PC-3 (cell line): ENCODE measurements at regions of chr11 and their contacts with region 1.

Region 1: GRCh38 chr11:59135648-59136461 is 6.8 kb upstream of the FAM111A start:
- DNase-seq: peak; percentile 85
- ATAC-seq: peak; percentile 100
- H3K4me3 ChIP-seq: peak overlapping the region; percentile 40
- H3K27ac ChIP-seq: no peak overlapping the region
- H3K4me1 ChIP-seq: 0 out of 2 replicates have a peak, but pooled peaks cover 3% of the 10 kb centered on the region
- H3K27me3 ChIP-seq: no peaks in the 10 kb centered on the region
- CTCF ChIP-seq: peak; percentile 98

Region 2: GRCh38 chr11:59053387-59053786 is 82.5 kb before region 1 on chr11:
- CTCF ChIA-PET with region 1: interaction called, 5 read pairs
- POLR2A ChIA-PET with region 1: no interaction called
- intact Hi-C with region 1: loop called (anchors 1 kb)
- DNase-seq: peak; percentile 75
- ATAC-seq: peak; percentile 51; the same call in 1 of the 2 replicates
- H3K4me3 ChIP-seq: no peak overlapping the region
- H3K27ac ChIP-seq: no peak overlapping the region
- H3K4me1 ChIP-seq: peaks cover 7% of the 10 kb centered on the region; the same call in 1 of the 2 replicates
- H3K27me3 ChIP-seq: peaks cover 48% of the 10 kb centered on the region
- CTCF ChIP-seq: peak; percentile 85

Region 3: DNA sequence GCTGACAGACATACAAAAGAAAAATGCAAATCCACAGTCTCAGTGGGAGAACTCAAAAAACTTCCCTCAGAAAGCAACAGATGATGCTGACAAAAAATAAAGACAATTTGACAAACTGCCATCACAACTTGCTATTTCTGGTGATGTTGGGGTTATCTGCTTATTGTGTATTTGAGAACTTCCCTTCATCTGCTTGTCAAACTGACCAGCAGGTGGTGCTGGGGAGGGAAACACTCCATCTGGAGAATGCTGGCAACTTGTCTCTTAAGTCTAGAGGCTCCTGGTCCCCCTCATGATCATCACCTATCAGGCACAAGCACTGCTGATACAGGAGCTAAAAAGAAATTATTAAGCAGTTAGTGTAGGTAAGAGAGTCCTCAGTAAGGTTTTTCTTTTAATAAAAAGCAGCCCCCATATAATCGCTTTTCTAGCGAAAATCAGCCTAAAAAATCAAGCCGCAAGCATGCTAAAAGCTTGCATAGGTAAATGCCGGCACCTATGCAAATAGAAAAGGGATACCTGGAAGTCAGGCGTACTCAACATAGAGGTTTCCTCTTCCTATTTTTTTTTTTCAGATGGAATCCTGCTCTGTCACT is 38.6 kb before region 1 on chr11:
- CTCF ChIA-PET with region 1: interaction called, 3 read pairs
- POLR2A ChIA-PET with region 1: no interaction called
- intact Hi-C with region 1: loop called (anchors 1 kb)
- DNase-seq: peak; percentile 75
- ATAC-seq: peak; percentile 74
- H3K4me3 ChIP-seq: no peak overlapping the region
- H3K27ac ChIP-seq: no peak overlapping the region
- H3K4me1 ChIP-seq: no peaks in the 10 kb centered on the region
- H3K27me3 ChIP-seq: 0 out of 2 replicates have a peak, but pooled peaks cover 18% of the 10 kb centered on the region
- CTCF ChIP-seq: peak; percentile 72